ENCODE measurements at regions of chr17 and their contacts with region 1.

Region 1: GRCh38 chr17:40358323-40359038 is 6.1 kb downstream of the GJD3 start:
- DNase-seq: peak; percentile 84 to 91
- H3K4me3 ChIP-seq: no peak overlapping the region
- H3K27ac ChIP-seq: peak overlapping the region; percentile 0 to 65
- H3K4me1 ChIP-seq: peaks cover 0 to 4% of the 10 kb centered on the region in 2 donors
- H3K27me3 ChIP-seq: no peaks in the 10 kb centered on the region
- CTCF ChIP-seq: peak; percentile 97 to 99 (median 99)
- POLR2A ChIP-seq: no peak

Region 2: DNA sequence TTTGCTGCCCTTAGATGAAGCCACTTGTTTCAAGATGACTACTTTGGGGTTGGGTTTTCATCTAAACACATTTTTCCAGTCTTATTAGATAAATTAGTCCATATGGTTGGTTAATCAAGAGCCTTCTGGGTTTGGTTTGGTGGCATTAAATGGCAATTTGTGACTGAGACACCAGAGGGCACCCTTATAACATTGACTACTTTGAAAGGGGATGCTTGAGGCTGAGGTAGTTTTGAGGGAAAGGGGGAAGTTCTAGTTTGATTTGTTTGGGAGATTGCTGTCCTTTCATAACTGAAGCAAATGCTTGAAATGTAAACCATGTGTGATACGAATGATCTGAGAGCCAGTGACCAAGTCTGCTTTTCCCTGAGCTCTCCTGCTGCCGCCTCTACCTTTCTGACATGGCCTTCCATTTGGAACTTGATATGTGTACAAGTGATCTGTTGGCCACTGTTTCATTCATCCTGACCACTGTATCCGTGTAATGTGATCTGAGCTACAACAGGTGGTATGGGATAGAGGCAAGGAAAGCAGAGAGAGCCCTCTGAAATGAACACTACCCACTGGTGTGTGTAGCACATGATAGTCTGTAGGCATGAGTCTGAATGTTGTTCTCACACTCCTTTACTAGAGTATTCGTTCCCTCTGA is 55.3 kb before region 1 on chr17:
- intact Hi-C with region 1: loop called (anchors 5 kb)
- DNase-seq: no peak
- H3K4me3 ChIP-seq: peak overlapping the region in 1 of 3 donors; percentile 7
- H3K27ac ChIP-seq: peak overlapping the region; percentile 50 to 52
- H3K4me1 ChIP-seq: peaks cover 11 to 18% of the 10 kb centered on the region in 2 donors
- H3K27me3 ChIP-seq: no peaks in the 10 kb centered on the region
- CTCF ChIP-seq: peak; percentile 71 to 86 (median 77)
- POLR2A ChIP-seq: no peak